Aorta (tissue), 5 donors: ENCODE measurements at regions of chr1 and their contacts with region 1.

Region 1: GRCh38 chr1:21200767-21201166 is 24.1 kb upstream of the EIF4G3 start:
- DNase-seq: no peak
- ATAC-seq: no peak
- H3K4me3 ChIP-seq: no peak overlapping the region
- H3K27ac ChIP-seq: no peak overlapping the region
- H3K4me1 ChIP-seq: no peaks in the 10 kb centered on the region
- H3K27me3 ChIP-seq: peaks cover 0 to 2% of the 10 kb centered on the region in 2 donors

Region 2: GRCh38 chr1:20696397-20697329 is 504.1 kb before region 1 on chr1:
- intact Hi-C with region 1: loop called (anchors 1 to 5 kb)
- DNase-seq: peak; percentile 91 to 95
- ATAC-seq: peak; percentile 95
- H3K4me3 ChIP-seq: peak overlapping the region; percentile 31 to 48
- H3K27ac ChIP-seq: peak overlapping the region in 1 of 2 donors; percentile 55
- H3K4me1 ChIP-seq: no peaks in the 10 kb centered on the region
- H3K27me3 ChIP-seq: no peaks in the 10 kb centered on the region

Region 3: DNA sequence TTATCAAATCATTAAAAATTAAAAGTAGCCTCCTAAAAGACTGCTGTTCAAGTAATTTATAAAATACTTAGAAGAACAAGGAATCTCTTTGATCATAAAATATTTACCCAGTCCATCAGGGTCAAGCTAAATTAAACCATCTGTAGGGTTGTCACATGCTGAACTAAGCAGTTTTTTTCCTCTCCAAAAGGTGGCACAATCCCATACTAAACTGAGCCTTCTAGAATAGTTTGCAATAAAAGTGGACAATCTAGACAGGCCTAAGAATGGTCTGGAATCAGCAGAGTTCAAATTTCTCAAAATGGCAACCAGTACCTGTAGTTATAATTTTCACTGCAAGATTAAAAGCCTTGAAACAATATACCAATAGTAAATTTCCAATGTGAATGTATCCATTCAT is 218.9 kb before region 1 on chr1:
- intact Hi-C with region 1: loop called (anchors 5 kb)
- DNase-seq: no peak
- ATAC-seq: no peak
- H3K4me3 ChIP-seq: no peak overlapping the region
- H3K27ac ChIP-seq: no peak overlapping the region
- H3K4me1 ChIP-seq: peaks cover 0 to 2% of the 10 kb centered on the region in 2 donors
- H3K27me3 ChIP-seq: no peaks in the 10 kb centered on the region